ENCODE measurements at regions of chr4 and their contacts with region 1.

Region 1: DNA sequence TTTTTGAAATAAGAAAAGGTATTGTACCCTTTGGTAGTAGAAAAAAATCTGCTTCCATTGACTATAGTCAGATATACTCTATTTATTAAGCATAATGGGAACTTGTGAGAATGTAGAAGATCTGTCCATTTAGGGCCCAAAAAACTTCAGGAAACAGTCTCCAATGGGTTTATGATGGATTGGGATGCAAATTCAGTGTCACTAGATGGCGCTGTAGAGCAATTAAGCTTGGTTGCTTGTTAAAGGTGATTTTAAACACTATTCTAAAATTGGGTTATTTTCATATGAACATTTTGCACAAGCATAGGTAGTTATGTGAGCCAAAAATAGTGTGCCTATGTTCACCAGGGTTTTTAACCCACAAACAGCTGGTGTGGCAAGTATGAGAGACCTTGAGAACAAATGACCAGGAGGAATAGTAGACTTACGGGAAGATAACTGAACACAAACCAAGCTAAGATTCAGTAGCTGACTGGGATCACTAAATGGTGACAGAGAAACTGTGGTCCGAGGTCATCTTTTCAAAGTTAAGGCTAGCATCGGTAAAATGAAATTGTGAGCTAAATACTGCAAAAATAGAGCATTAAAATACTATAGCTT is 80.3 kb upstream of the LSM6 start:
- DNase-seq: no peak
- ATAC-seq: no peak
- H3K4me3 Mint-ChIP-seq: no peak overlapping the region
- H3K27ac Mint-ChIP-seq: no peak overlapping the region
- H3K4me1 Mint-ChIP-seq: peaks cover 14% of the 10 kb centered on the region
- H3K27me3 Mint-ChIP-seq: no peaks in the 10 kb centered on the region
- CTCF ChIP-seq: no peak

Region 2: GRCh38 chr4:145881989-145882388 is 213.2 kb before region 1 on chr4:
- CTCF ChIA-PET with region 1: no interaction called
- POLR2A ChIA-PET with region 1: no interaction called
- intact Hi-C with region 1: no loop called
- DNase-seq: no peak
- ATAC-seq: peak; percentile 57
- H3K4me3 Mint-ChIP-seq: peak overlapping the region; percentile 35
- H3K27ac Mint-ChIP-seq: peak overlapping the region; percentile 35
- H3K4me1 Mint-ChIP-seq: peaks cover 36% of the 10 kb centered on the region
- H3K27me3 Mint-ChIP-seq: no peaks in the 10 kb centered on the region
- CTCF ChIP-seq: no peak

Region 3: GRCh38 chr4:145956288-145956890 is 138.8 kb before region 1 on chr4:
- CTCF ChIA-PET with region 1: no interaction called
- POLR2A ChIA-PET with region 1: no interaction called
- intact Hi-C with region 1: loop called (anchors 2 kb)
- DNase-seq: no peak
- ATAC-seq: peak; percentile 77
- H3K4me3 Mint-ChIP-seq: no peak overlapping the region
- H3K27ac Mint-ChIP-seq: no peak overlapping the region
- H3K4me1 Mint-ChIP-seq: peaks cover 6% of the 10 kb centered on the region
- H3K27me3 Mint-ChIP-seq: no peaks in the 10 kb centered on the region
- CTCF ChIP-seq: peak; percentile 87

Region 4: GRCh38 chr4:146073517-146073916 is 21.7 kb before region 1 on chr4:
- CTCF ChIA-PET with region 1: interaction called, 4 read pairs
- POLR2A ChIA-PET with region 1: no interaction called
- intact Hi-C with region 1: loop called (anchors 2 kb)
- DNase-seq: no peak
- ATAC-seq: peak; percentile 37
- H3K4me3 Mint-ChIP-seq: no peak overlapping the region
- H3K27ac Mint-ChIP-seq: no peak overlapping the region
- H3K4me1 Mint-ChIP-seq: no peaks in the 10 kb centered on the region
- H3K27me3 Mint-ChIP-seq: peaks cover 4% of the 10 kb centered on the region
- CTCF ChIP-seq: no peak

Region 5: DNA sequence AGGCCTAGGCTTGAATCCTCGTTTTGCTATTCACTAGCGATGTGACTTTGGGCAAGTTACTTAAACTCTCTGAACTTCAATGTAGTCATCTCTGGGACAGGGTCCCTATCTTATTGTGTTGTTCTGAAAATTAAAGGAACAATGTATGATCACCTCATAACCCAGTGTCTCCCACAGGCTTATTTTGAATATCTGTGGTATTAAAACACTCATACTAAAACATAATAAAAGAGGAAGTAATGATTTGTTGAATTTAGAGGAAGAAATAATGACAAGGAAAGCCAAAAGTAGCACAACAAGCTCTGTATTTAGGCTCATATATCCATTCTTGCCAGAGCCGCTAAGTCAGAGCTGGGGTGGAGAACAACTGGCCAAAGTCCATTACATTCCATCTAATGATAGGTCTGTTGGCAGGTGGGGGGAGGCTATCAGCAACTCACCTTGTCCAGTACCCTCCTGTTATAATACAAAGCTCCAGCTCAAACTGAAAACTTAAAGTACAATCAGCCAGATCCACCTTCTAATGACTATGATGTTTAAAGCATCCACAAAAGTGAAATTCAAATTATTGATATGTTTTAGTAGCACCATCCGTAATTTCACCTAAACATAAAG is 15.8 kb after region 1 on chr4:
- CTCF ChIA-PET with region 1: interaction called, 14 read pairs
- POLR2A ChIA-PET with region 1: interaction called, 4 read pairs
- intact Hi-C with region 1: no loop called
- DNase-seq: no peak
- ATAC-seq: peak; percentile 88
- H3K4me3 Mint-ChIP-seq: peak overlapping the region; percentile 33
- H3K27ac Mint-ChIP-seq: peak overlapping the region; percentile 63
- H3K4me1 Mint-ChIP-seq: peaks cover 34% of the 10 kb centered on the region
- H3K27me3 Mint-ChIP-seq: no peaks in the 10 kb centered on the region
- CTCF ChIP-seq: no peak

Region 6: DNA sequence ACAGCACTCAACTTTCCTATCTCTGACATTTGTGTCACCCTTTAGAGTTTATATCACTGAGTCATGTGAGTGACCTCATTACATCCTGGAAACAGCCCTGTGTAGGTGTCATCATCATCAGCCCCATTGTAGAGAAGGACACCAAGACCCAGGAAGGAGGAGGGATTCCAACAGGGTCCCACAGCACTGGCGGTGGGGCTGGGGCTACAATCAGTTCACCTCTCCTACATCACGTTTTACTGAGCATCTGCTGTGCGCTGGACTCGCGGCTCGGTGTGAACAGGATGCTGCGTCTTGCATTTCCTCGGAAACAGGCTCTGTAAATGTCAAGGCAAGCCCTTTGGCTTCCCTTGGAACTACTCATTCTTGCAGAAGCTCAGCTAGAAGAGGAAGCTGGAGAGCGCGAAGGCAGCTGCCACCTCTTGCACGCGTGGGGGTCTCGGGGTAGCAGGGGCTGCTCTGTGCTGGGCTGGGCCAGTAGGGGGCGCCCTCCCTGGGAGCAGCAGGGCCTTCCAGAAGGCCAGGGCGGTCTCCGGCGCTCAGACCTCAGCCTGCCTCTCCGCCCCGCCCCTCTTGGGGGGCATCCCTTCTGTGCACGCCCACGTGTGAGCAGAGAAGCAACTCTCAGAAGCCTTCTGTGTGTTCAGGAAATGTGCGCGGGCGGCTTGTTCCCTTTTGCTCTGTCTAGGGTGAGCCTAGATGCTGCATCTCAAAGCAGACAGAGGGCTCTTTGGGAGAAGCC is 148.1 kb after region 1 on chr4:
- CTCF ChIA-PET with region 1: no interaction called
- POLR2A ChIA-PET with region 1: no interaction called
- intact Hi-C with region 1: loop called (anchors 2 kb)
- DNase-seq: peak; percentile 33
- ATAC-seq: peak; percentile 78
- H3K4me3 Mint-ChIP-seq: no peak overlapping the region
- H3K27ac Mint-ChIP-seq: no peak overlapping the region
- H3K4me1 Mint-ChIP-seq: peaks cover 12% of the 10 kb centered on the region
- H3K27me3 Mint-ChIP-seq: no peaks in the 10 kb centered on the region
- CTCF ChIP-seq: no peak

Region 7: DNA sequence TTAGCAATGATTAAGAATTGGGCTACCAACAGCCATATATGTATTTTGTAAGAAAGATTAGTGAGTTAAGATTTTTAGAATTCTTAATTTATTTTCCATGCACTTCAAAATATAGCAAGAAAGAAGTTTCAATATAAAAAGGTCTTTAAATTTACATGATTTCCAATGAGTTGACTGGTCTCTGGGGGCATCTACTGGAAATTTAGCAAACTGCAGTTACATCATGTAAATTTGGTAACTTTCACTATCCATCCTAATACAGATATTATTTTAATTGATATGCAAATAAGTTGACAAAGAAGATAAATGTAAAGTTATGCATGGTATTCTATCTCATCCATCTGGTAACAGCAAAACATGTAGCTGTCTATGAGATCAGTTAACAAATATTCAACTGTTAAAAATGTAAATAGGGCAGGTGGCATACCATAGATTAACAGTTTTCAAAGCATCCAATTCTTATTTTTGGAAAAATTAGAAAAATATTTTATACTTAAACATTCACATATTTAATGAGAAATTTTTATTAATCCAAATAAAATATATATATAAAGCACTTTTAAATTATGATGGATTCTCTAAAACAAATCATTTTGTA is 821.4 kb after region 1 on chr4:
- CTCF ChIA-PET with region 1: no interaction called
- POLR2A ChIA-PET with region 1: no interaction called
- intact Hi-C with region 1: loop called (anchors 10 kb)
- DNase-seq: no peak
- ATAC-seq: no peak
- H3K4me3 Mint-ChIP-seq: no peak overlapping the region
- H3K27ac Mint-ChIP-seq: no peak overlapping the region
- H3K4me1 Mint-ChIP-seq: no peaks in the 10 kb centered on the region
- H3K27me3 Mint-ChIP-seq: peaks cover 8% of the 10 kb centered on the region
- CTCF ChIP-seq: no peak

Region 8: GRCh38 chr4:147060151-147060931 is 965.1 kb after region 1 on chr4:
- CTCF ChIA-PET with region 1: no interaction called
- POLR2A ChIA-PET with region 1: no interaction called
- intact Hi-C with region 1: no loop called
- DNase-seq: no peak
- ATAC-seq: no peak
- H3K4me3 Mint-ChIP-seq: no peak overlapping the region
- H3K27ac Mint-ChIP-seq: no peak overlapping the region
- H3K4me1 Mint-ChIP-seq: peaks cover 25% of the 10 kb centered on the region
- H3K27me3 Mint-ChIP-seq: no peaks in the 10 kb centered on the region
- CTCF ChIP-seq: no peak

Measured in activated B cell treated with CpG ODN at 0.5 μM for 24 hours (primary cell).